Vagina (tissue), 2 donors: ENCODE measurements at regions of chr3 and their contacts with region 1.

Region 1: GRCh38 chr3:33722626-33723370 is 4.7 kb upstream of the CLASP2 start:
- DNase-seq: no peak
- H3K4me3 ChIP-seq: no peak overlapping the region
- H3K27ac ChIP-seq: no peak overlapping the region
- H3K4me1 ChIP-seq: peaks cover 8% of the 10 kb centered on the region
- H3K27me3 ChIP-seq: no peaks in the 10 kb centered on the region
- CTCF ChIP-seq: no peak
- POLR2A ChIP-seq: no peak

Region 2: GRCh38 chr3:33798411-33799201 is 75.8 kb after region 1 on chr3 and contains the start of gene PDCD6IP:
- intact Hi-C with region 1: loop called (anchors 5 kb)
- DNase-seq: peak in 1 of 2 donors; percentile 94
- H3K4me3 ChIP-seq: peak within 1 kb of the TSS; percentile 88 to 98
- H3K27ac ChIP-seq: peak within 1 kb of the TSS; percentile 92
- H3K4me1 ChIP-seq: peaks cover 54% of the 10 kb centered on the region
- H3K27me3 ChIP-seq: no peaks in the 10 kb centered on the region
- CTCF ChIP-seq: no peak
- POLR2A ChIP-seq: peak in 1 of 2 donors; percentile 81
- total RNA-seq, gene PDCD6IP: 184 TPM